Activated CD4-positive, alpha-beta memory T cell treated with anti-CD3 and anti-CD28 coated beads for 36 hours (primary cell): ENCODE measurements at regions of chr5 and their contacts with region 1.

Region 1: DNA sequence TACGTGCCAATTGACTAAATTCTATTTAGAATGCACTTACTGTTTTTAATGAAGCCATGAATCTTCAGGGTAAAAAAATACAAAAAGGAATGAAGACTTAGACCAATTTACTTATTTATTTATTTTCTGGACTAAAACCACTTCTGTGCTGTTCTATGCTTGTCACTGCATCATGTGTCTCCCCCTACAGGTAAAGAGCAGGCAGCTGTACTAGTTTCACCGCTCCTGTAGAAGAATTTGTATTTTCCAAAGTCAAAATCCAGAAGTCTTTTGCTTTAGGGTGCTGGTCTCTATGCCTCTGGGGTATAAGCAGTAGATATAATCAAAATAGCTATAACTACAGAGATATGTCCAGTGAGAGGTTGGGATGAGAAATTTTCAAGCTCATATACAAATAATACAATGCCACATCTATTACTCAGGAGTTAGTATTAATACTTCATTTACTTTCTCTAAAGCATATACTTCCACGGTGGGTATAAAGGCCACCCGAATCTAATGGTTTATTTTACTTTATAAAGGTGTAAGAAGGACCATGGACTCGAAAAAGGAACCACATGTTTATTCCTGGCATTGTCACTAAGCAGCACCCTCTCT is 591.5 kb downstream of the RAB3C start:
- DNase-seq: peak; percentile 33
- H3K4me3 Mint-ChIP-seq: no peak overlapping the region
- H3K27ac Mint-ChIP-seq: no peak overlapping the region
- H3K4me1 Mint-ChIP-seq: peaks cover 24% of the 10 kb centered on the region
- H3K27me3 Mint-ChIP-seq: no peaks in the 10 kb centered on the region

Region 2: GRCh38 chr5:58871648-58872242 is 302.6 kb before region 1 on chr5:
- CTCF ChIA-PET with region 1: interaction called, 12 read pairs
- POLR2A ChIA-PET with region 1: no interaction called
- intact Hi-C with region 1: loop called (anchors 1 kb)
- DNase-seq: no peak
- H3K4me3 Mint-ChIP-seq: no peak overlapping the region
- H3K27ac Mint-ChIP-seq: no peak overlapping the region
- H3K4me1 Mint-ChIP-seq: no peaks in the 10 kb centered on the region
- H3K27me3 Mint-ChIP-seq: peaks cover 12% of the 10 kb centered on the region

Region 3: GRCh38 chr5:59099270-59099994 is 74.9 kb before region 1 on chr5:
- CTCF ChIA-PET with region 1: interaction called, 6 read pairs
- POLR2A ChIA-PET with region 1: no interaction called
- intact Hi-C with region 1: loop called (anchors 2 kb)
- DNase-seq: peak; percentile 63
- H3K4me3 Mint-ChIP-seq: peak overlapping the region; percentile 8
- H3K27ac Mint-ChIP-seq: peak overlapping the region; percentile 73
- H3K4me1 Mint-ChIP-seq: peaks cover 37% of the 10 kb centered on the region
- H3K27me3 Mint-ChIP-seq: no peaks in the 10 kb centered on the region

Region 4: GRCh38 chr5:59126708-59127573 is 47.4 kb before region 1 on chr5:
- CTCF ChIA-PET with region 1: interaction called, 24 read pairs
- POLR2A ChIA-PET with region 1: no interaction called
- intact Hi-C with region 1: loop called (anchors 1 kb)
- DNase-seq: no peak
- H3K4me3 Mint-ChIP-seq: no peak overlapping the region
- H3K27ac Mint-ChIP-seq: no peak overlapping the region
- H3K4me1 Mint-ChIP-seq: peaks cover 15% of the 10 kb centered on the region
- H3K27me3 Mint-ChIP-seq: no peaks in the 10 kb centered on the region

Region 5: GRCh38 chr5:59152701-59153245 is 21.6 kb before region 1 on chr5:
- CTCF ChIA-PET with region 1: interaction called, 16 read pairs
- POLR2A ChIA-PET with region 1: no interaction called
- intact Hi-C with region 1: no loop called
- DNase-seq: peak; percentile 19
- H3K4me3 Mint-ChIP-seq: peak overlapping the region; percentile 7
- H3K27ac Mint-ChIP-seq: peak overlapping the region; percentile 67
- H3K4me1 Mint-ChIP-seq: peaks cover 16% of the 10 kb centered on the region
- H3K27me3 Mint-ChIP-seq: no peaks in the 10 kb centered on the region

Region 6: DNA sequence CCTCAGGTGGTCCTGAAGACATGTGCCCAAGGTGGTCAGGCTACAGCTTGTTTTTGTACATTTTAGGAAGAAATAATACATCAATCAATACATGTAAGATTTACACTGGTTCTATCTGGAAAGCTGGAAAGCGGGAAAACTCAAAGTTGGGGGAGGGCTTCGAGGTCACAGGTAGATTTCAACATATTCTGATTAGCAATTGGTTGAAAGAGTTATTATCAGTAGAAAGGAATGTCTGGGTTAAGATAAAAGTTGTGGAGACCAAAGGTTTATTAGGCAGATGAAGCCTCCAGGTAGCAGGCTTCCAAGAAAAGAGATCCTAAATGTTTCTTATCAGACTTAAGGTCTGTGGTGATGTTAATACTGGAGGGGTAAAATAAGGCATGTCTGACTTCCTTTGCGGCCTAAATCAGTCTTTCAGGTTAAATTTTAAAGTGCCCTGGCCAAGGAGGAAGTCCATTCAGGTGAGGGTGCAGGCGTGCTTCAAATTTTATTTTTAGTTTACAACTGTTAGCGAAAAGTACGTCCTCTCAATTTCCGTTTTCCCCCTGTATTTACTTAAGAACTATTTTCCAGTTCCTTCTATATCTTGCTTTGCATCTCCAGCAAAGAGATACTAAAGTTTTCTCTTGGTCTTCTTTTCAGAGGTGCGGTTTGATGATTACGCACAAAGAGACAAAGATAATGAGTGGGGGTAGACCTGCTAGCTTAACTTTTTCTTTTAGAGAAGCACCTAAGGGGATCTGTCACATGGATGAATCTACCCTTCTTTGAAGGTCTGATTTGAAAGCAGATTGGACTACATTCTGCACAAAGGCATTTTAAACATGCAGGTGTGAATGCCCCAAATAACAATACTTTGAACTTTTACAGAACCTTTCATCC is 12.9 kb before region 1 on chr5:
- CTCF ChIA-PET with region 1: interaction called, 17 read pairs
- POLR2A ChIA-PET with region 1: no interaction called
- intact Hi-C with region 1: no loop called
- DNase-seq: no peak
- H3K4me3 Mint-ChIP-seq: no peak overlapping the region
- H3K27ac Mint-ChIP-seq: peak overlapping the region; percentile 54
- H3K4me1 Mint-ChIP-seq: peaks cover 15% of the 10 kb centered on the region
- H3K27me3 Mint-ChIP-seq: no peaks in the 10 kb centered on the region